Activated naive CD4-positive, alpha-beta T cell treated with anti-CD3 and anti-CD28 coated beads for 36 hours (primary cell): ENCODE measurements at regions of chr3 and their contacts with region 1.

Region 1: GRCh38 chr3:141487521-141488252 is 860 bp downstream of the RASA2 start:
- DNase-seq: peak; percentile 93
- H3K4me3 Mint-ChIP-seq: peak overlapping the region; percentile 87
- H3K27ac Mint-ChIP-seq: peak overlapping the region; percentile 94
- H3K4me1 Mint-ChIP-seq: peaks cover 68% of the 10 kb centered on the region
- H3K27me3 Mint-ChIP-seq: no peaks in the 10 kb centered on the region

Region 2: GRCh38 chr3:141303481-141304223 is 184.0 kb before region 1 on chr3:
- CTCF ChIA-PET with region 1: no interaction called
- intact Hi-C with region 1: loop called (anchors 1 kb)
- DNase-seq: peak; percentile 85
- H3K4me3 Mint-ChIP-seq: no peak overlapping the region
- H3K27ac Mint-ChIP-seq: no peak overlapping the region
- H3K4me1 Mint-ChIP-seq: peaks cover 55% of the 10 kb centered on the region
- H3K27me3 Mint-ChIP-seq: no peaks in the 10 kb centered on the region

Region 3: DNA sequence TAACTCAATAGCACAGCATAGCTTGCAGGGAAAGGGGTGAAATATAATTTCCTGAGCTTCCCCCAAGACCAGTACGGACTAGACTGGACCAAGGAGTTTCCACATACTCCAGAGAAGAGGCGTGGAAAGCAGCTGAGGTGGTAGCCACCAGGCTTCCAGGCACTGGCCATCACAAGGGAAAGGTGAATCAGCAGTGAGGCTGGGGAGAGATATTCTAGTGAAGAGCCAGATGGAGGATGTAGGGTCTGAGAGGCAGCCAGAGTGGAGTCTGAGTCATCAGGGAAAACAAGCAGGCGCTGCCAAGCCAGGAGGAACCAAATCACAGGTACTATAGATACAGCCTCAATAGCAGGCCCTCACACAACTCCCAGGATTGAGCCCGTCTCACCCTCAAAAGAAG is 10.5 kb before region 1 on chr3:
- CTCF ChIA-PET with region 1: interaction called, 5 read pairs
- intact Hi-C with region 1: loop called (anchors 1 kb)
- DNase-seq: no peak
- H3K4me3 Mint-ChIP-seq: no peak overlapping the region
- H3K27ac Mint-ChIP-seq: no peak overlapping the region
- H3K4me1 Mint-ChIP-seq: peaks cover 17% of the 10 kb centered on the region
- H3K27me3 Mint-ChIP-seq: no peaks in the 10 kb centered on the region

Region 4: DNA sequence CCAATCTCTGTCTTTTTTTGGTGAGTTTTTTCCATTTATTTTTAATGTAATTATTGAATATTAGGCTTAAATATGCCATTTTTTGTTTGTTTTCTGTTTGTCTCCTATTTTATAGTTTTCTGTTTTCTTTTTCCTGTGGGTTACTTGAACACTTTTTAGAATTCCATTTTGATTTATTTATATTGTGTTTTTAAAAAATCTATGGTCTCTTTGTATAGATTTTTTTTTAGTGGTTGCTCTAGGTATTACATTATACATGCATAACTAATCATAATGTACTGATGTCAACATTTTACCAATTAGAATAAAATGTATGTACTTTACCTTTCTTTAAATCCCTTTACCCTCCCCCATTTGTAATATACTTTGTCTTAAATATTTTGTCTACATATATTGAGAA is 55.3 kb after region 1 on chr3:
- CTCF ChIA-PET with region 1: interaction called, 4 read pairs
- intact Hi-C with region 1: loop called (anchors 1 kb)
- DNase-seq: no peak
- H3K4me3 Mint-ChIP-seq: no peak overlapping the region
- H3K27ac Mint-ChIP-seq: no peak overlapping the region
- H3K4me1 Mint-ChIP-seq: peaks cover 66% of the 10 kb centered on the region
- H3K27me3 Mint-ChIP-seq: no peaks in the 10 kb centered on the region